ENCODE measurements at regions of chr17 and their contacts with region 1.

Region 1: GRCh38 chr17:65122836-65123756 is 14.1 kb upstream of the RGS9 start:
- DNase-seq: peak; percentile 96
- H3K4me3 Mint-ChIP-seq: peak overlapping the region; percentile 86
- H3K27ac Mint-ChIP-seq: peak overlapping the region; percentile 97
- H3K4me1 Mint-ChIP-seq: peaks cover 22% of the 10 kb centered on the region
- H3K27me3 Mint-ChIP-seq: peaks cover 12% of the 10 kb centered on the region

Region 2: DNA sequence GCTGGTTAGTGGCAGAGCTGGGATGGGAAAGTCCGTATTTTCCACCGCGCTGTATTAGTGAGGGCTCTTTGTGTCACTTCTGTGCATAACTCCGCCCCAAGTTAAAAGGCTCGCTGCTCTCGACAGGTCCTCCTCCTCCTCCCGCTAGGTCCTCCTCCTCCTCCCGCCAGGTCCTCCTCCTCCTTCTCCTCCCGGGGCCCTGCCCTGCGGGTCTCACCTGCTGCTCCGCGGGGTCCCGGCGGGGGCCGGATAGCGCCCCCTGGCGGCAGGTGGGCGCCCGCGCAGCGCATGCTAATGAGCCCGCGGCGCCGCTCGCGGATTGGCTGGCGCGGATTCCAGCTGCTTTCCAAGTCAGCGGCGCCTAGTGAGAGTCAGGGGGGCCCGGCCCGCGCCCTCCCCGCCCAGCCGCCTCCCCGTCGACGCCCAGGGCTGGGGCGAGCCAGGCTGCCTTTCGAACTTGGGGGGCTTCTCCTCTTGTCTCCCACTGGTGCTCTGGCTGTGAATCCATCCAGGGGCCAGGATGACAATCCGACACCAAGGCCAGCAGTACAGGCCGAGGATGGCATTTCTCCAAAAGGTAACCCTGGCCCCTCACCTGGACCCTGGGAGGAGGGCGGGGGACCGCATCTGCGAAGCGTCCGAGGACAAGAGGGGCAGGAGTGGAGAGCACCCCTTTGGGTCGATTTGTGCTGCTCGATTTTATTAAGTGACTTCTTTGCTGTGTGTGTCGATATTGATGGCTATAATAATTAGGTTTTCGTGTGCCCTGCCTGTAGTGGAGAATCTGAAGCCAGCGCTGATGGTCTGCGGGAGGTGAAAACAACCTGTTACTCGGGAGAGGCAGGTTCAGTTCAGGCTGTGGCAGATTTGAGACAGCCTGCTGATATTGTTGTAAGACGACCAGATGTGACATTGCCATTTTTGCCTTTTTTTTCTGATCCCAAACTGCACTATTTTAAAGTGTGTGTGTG is 14.2 kb after region 1 on chr17 and contains the start of gene RGS9:
- intact Hi-C with region 1: loop called (anchors 1 kb)
- DNase-seq: peak; percentile 97
- H3K4me3 Mint-ChIP-seq: peak within 1 kb of the TSS; percentile 80
- H3K27ac Mint-ChIP-seq: peak within 1 kb of the TSS; percentile 50
- H3K4me1 Mint-ChIP-seq: peaks cover 31% of the 10 kb centered on the region
- H3K27me3 Mint-ChIP-seq: peaks cover 15% of the 10 kb centered on the region
- total RNA-seq, gene RGS9: 2.2 and 3.1 TPM in 2 replicates

Region 3: DNA sequence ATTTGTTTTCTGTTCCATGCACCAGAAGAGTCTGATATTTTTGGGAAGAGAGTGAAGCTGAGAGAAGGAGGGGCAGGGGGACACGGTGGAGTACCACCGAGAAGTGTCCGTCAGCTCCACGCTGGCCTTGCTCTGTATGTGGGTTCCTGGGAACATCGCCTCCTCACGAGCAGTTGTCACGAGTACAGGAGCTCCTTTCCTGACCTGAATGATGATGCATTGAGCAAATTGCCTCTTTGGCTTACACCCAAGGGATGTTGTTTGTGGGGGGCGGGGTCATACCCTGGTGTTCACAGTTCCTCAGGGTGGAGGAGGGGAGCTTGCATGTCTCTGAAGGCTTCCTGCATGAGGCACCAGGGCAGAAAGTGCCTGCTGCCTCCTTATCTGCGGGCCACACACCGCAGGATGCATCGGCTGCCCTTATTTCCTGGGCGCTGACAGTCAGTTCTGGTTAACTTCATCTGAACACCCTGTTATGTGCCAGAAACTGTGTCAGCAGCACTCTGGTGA is 50.2 kb after region 1 on chr17:
- intact Hi-C with region 1: no loop called
- DNase-seq: peak; percentile 93
- H3K4me3 Mint-ChIP-seq: no peak overlapping the region
- H3K27ac Mint-ChIP-seq: no peak overlapping the region
- H3K4me1 Mint-ChIP-seq: peaks cover 33% of the 10 kb centered on the region
- H3K27me3 Mint-ChIP-seq: no peaks in the 10 kb centered on the region

Measured in activated CD4-positive, alpha-beta T cell treated with anti-CD3 and anti-CD28 coated beads, Interleukin-2, amount 10 ng/mL, durations not matched to agents 24 days and 14 days (primary cell).